ENCODE measurements at regions of chr4 and their contacts with region 1.

Region 1: DNA sequence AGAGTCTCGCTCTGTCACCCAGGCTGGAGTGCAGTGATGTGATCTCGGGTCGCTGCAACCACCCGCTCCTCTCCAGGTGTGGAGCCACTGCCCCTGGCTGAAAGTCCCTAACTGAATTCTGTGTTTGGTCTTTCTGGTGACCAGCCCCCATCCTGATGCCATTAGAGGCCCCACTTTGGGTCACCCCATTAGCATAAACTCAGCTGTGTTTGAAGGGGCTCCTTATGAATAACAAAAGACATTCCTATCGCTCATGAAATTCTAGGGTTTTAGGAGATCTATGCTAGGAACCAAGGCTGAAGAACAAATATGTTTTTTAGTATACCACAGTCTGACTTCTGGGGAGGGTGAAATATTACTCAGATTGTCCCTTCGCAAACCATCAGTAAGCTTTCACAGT is 652.9 kb downstream of the ADGRL3 start:
- DNase-seq: no peak
- H3K4me3 ChIP-seq: no peak overlapping the region
- H3K27ac ChIP-seq: no peak overlapping the region
- H3K4me1 ChIP-seq: no peaks in the 10 kb centered on the region
- CTCF ChIP-seq: no peak

Region 2: DNA sequence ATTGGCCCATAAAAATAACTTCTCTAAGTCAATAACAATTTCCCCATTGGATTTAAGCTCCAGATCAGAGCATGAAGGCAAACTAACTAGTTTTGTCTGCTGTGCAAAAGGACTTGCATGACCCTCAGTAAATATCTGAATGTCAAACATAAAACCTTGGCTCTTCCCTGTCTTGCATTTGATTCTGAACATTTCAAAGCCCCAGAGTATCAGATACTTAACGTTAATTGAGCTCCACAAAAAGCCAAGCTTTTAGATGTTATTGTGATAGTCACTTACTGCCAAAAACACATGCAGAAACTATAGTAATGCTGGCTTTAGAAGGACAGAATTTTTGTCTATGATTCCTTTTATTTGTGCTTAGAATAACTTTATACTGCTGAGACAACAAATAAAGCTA is 11.2 kb after region 1 on chr4:
- CTCF ChIA-PET with region 1: no interaction called
- POLR2A ChIA-PET with region 1: interaction called, 10 read pairs
- intact Hi-C with region 1: no loop called
- DNase-seq: no peak
- H3K4me3 ChIP-seq: no peak overlapping the region
- H3K27ac ChIP-seq: no peak overlapping the region
- H3K4me1 ChIP-seq: no peaks in the 10 kb centered on the region
- CTCF ChIP-seq: no peak

Region 3: GRCh38 chr4:62288808-62289541 is 435.9 kb after region 1 on chr4:
- CTCF ChIA-PET with region 1: no interaction called
- POLR2A ChIA-PET with region 1: no interaction called
- intact Hi-C with region 1: no loop called
- DNase-seq: no peak
- H3K4me3 ChIP-seq: no peak overlapping the region
- H3K27ac ChIP-seq: no peak overlapping the region
- H3K4me1 ChIP-seq: no peaks in the 10 kb centered on the region
- CTCF ChIP-seq: no peak

Measured in OCI-LY7 (cell line).